Activated CD8-positive, alpha-beta T cell treated with anti-CD3 and anti-CD28 coated beads for 36 hours (primary cell): ENCODE measurements at regions of chr6 and their contacts with region 1.

Region 1: DNA sequence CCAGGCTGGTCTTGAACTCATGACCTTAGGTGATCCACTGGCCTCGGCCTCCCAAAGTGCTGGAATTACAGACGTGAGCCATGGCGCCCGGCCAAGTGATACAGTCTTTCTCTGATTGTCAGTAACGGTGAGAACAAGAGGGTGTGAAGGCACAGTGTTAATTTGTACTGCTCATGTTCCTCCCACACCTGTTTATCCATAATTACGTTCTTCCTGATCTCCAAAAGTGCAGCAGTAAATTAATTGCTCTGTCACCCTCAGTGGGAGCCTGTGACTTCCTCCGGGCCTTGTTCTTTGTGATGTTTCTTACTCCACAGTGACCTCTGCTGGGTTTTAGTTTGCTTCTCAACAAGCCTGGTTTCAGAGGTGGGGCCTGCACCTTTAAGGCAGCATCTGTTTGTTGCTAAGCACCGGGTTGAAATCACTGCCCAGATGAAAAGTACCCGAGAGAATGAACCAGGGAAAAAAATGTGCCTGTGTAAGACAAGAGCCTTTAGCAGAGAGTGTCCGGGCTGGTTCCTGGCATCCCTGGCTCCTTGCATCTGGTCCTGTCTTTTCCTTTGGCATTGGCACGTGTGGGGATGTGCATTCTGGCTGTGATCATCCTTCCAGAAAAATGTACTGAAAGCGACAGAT is 89.1 kb upstream of the CLDN20 start:
- DNase-seq: peak; percentile 79
- ATAC-seq: peak; percentile 55
- H3K4me3 Mint-ChIP-seq: no peak overlapping the region
- H3K27ac Mint-ChIP-seq: peak overlapping the region; percentile 33
- H3K4me1 Mint-ChIP-seq: peaks cover 46% of the 10 kb centered on the region
- H3K27me3 Mint-ChIP-seq: no peaks in the 10 kb centered on the region
- CTCF ChIP-seq: peak; percentile 75

Region 2: GRCh38 chr6:154868143-154868594 is 306.5 kb before region 1 on chr6:
- CTCF ChIA-PET with region 1: interaction called, 11 read pairs
- POLR2A ChIA-PET with region 1: no interaction called
- intact Hi-C with region 1: loop called (anchors 5 kb)
- DNase-seq: no peak
- ATAC-seq: no peak
- H3K4me3 Mint-ChIP-seq: no peak overlapping the region
- H3K27ac Mint-ChIP-seq: no peak overlapping the region
- H3K4me1 Mint-ChIP-seq: peaks cover 17% of the 10 kb centered on the region
- H3K27me3 Mint-ChIP-seq: no peaks in the 10 kb centered on the region
- CTCF ChIP-seq: peak; percentile 67

Region 3: DNA sequence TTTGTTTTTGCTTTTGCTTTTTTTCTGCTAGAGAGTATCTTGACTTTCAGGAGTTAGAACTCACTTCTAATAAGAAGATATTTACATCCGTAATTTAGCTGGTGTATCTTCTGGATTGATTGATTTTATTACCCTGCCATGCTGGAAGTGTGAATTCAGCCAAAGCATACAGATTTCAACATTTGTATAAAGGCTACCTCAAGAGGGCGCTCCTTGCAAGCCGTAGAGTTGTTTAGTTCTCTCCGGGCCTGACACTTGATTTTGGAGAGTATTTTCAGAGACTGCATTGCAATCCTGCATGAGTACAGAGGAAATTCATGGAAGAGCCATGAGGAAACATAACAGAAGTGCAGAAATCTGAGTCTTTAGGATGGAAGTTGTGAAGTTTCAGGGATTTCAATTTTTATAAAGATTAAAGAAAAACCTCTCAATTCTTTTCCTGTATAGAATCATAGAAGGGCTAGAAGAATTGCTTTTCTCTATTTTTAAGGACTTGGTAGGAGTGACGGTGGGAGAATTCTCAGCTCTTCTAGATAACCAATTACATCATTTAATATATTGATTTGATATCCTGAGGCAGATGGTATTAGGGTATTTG is 246.3 kb before region 1 on chr6:
- CTCF ChIA-PET with region 1: interaction called, 69 read pairs
- POLR2A ChIA-PET with region 1: interaction called, 8 read pairs
- intact Hi-C with region 1: loop called (anchors 1 kb)
- DNase-seq: peak; percentile 84
- ATAC-seq: peak; percentile 77
- H3K4me3 Mint-ChIP-seq: no peak overlapping the region
- H3K27ac Mint-ChIP-seq: no peak overlapping the region
- H3K4me1 Mint-ChIP-seq: peaks cover 5% of the 10 kb centered on the region
- H3K27me3 Mint-ChIP-seq: no peaks in the 10 kb centered on the region
- CTCF ChIP-seq: peak; percentile 87

Region 4: DNA sequence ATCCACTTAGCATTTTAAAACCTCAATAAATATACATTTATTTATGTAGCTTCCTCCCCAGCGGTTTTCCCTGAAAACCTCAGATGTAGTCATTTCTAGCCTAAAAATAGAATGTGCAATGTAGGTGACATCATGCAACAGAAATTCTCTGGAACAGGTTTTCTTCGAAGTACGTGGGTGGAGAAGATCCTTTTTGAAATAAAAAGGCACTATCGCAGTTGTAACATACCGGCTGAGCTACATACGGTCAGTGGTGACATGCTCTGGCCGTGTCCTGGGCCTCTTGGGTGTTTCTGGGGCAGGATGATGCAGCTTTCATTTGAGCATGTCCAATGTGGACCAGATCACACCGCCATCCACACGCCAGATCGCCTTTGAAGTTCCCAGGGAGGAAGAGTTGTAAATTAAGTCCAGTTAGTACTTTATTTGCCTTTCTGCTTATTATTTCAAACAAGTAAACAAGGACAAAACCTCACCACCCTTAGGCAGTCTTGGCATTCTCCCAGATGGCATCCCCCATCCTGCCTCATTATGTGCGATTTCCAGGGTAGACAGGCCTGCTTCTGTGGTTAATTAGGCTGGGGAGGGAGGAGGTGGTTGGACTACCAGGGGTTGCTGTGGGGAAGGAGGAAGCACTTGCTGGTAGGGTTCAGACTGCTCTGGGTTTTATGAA is 20.4 kb before region 1 on chr6:
- CTCF ChIA-PET with region 1: interaction called, 27 read pairs
- POLR2A ChIA-PET with region 1: interaction called, 25 read pairs
- intact Hi-C with region 1: loop called (anchors 1 kb)
- DNase-seq: peak; percentile 63
- ATAC-seq: peak; percentile 74
- H3K4me3 Mint-ChIP-seq: peak overlapping the region; percentile 63
- H3K27ac Mint-ChIP-seq: peak overlapping the region; percentile 98
- H3K4me1 Mint-ChIP-seq: peaks cover 83% of the 10 kb centered on the region
- H3K27me3 Mint-ChIP-seq: no peaks in the 10 kb centered on the region
- CTCF ChIP-seq: no peak

Region 5: DNA sequence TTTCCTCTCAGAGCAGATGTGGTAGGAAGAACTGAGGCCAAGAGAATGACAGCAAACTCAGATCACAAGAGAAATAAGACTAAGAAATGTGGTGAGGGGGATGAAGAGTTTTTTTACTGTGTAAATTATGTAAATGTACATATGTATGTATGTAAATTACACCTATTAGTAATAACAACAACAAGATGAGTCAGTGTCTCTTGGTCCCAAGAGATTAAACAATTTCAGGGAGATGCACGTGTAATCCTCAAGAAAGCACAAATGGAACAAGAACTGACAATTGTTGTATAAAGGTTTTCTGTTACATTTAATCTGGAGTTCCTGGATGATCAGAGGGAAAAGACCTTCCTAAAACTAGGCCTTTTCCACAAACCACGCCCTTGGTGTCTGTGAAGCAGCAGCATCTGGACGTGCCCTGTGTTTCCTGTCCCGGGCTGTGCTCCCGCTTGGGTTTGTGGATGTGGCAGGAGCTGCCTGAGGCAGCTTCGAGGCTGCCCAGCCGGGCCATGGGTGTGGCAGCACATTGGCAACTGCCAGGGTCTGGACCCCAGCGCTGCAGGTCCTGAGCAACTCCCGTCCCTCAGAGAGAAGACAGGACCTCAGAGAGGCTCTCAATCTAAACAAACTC is 90.1 kb after region 1 on chr6:
- CTCF ChIA-PET with region 1: interaction called, 12 read pairs
- POLR2A ChIA-PET with region 1: interaction called, 5 read pairs
- intact Hi-C with region 1: no loop called
- DNase-seq: no peak
- ATAC-seq: no peak
- H3K4me3 Mint-ChIP-seq: no peak overlapping the region
- H3K27ac Mint-ChIP-seq: no peak overlapping the region
- H3K4me1 Mint-ChIP-seq: peaks cover 15% of the 10 kb centered on the region
- H3K27me3 Mint-ChIP-seq: no peaks in the 10 kb centered on the region
- CTCF ChIP-seq: no peak

Region 6: GRCh38 chr6:155530219-155530834 is 355.6 kb after region 1 on chr6:
- CTCF ChIA-PET with region 1: no interaction called
- POLR2A ChIA-PET with region 1: no interaction called
- intact Hi-C with region 1: loop called (anchors 10 kb)
- DNase-seq: peak; percentile 35
- ATAC-seq: peak; percentile 69
- H3K4me3 Mint-ChIP-seq: no peak overlapping the region
- H3K27ac Mint-ChIP-seq: no peak overlapping the region
- H3K4me1 Mint-ChIP-seq: peaks cover 21% of the 10 kb centered on the region
- H3K27me3 Mint-ChIP-seq: peaks cover under 1% of the 10 kb centered on the region
- CTCF ChIP-seq: peak; percentile 74